Activated naive CD4-positive, alpha-beta T cell treated with anti-CD3 and anti-CD28 coated beads for 36 hours (primary cell): ENCODE measurements at regions of chr2 and their contacts with region 1.

Region 1: GRCh38 chr2:68742626-68743415 is 8.2 kb downstream of the ARHGAP25 start:
- DNase-seq: peak; percentile 45
- H3K4me3 Mint-ChIP-seq: no peak overlapping the region
- H3K27ac Mint-ChIP-seq: peak overlapping the region; percentile 91
- H3K4me1 Mint-ChIP-seq: peaks cover 93% of the 10 kb centered on the region
- H3K27me3 Mint-ChIP-seq: no peaks in the 10 kb centered on the region

Region 2: GRCh38 chr2:68500649-68501048 is 242.2 kb before region 1 on chr2:
- CTCF ChIA-PET with region 1: no interaction called
- intact Hi-C with region 1: no loop called
- DNase-seq: no peak
- H3K4me3 Mint-ChIP-seq: no peak overlapping the region
- H3K27ac Mint-ChIP-seq: no peak overlapping the region
- H3K4me1 Mint-ChIP-seq: peaks cover 2% of the 10 kb centered on the region
- H3K27me3 Mint-ChIP-seq: no peaks in the 10 kb centered on the region

Region 3: GRCh38 chr2:68643011-68643873 is 99.6 kb before region 1 on chr2 and contains the start of gene PROKR1:
- CTCF ChIA-PET with region 1: no interaction called
- intact Hi-C with region 1: no loop called
- DNase-seq: peak; percentile 30
- H3K4me3 Mint-ChIP-seq: peak within 1 kb of the TSS; percentile 25
- H3K27ac Mint-ChIP-seq: no peak within 1 kb of the TSS
- H3K4me1 Mint-ChIP-seq: peaks cover 10% of the 10 kb centered on the region
- H3K27me3 Mint-ChIP-seq: peaks cover 62% of the 10 kb centered on the region
- total RNA-seq, gene PROKR1: not detected

Region 4: DNA sequence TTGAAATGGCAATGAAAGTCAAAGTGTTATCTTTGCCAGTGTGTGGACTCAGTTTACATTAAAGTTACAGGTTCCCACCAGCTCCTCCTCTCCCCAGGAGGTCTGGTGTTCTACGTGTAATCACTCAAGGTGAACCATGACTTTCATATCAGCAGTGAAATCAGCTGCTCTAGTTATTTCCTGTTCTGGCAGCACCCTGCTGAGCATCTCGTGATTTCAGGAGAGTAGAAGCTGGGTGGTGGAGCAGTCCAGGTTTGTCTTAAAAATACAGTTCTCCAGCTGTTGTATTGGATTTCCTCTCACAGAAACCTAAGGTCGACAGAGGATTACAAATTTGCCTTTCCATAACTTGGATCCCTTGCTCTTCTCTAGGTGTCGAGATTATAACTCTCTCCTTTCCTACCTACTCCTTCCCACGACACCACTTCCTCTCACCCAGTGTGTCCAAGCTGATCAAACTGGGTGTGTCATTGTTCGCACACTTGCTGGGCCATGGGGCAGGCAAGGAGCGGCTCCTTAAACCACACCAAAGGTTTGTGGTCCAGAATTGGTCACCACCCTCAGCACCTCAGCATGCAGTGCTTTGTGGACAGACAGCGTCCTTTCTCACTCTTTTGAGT is 21.2 kb before region 1 on chr2:
- CTCF ChIA-PET with region 1: interaction called, 23 read pairs
- intact Hi-C with region 1: loop called (anchors 1 kb)
- DNase-seq: peak; percentile 62
- H3K4me3 Mint-ChIP-seq: peak overlapping the region; percentile 52
- H3K27ac Mint-ChIP-seq: peak overlapping the region; percentile 87
- H3K4me1 Mint-ChIP-seq: peaks cover 82% of the 10 kb centered on the region
- H3K27me3 Mint-ChIP-seq: no peaks in the 10 kb centered on the region

Region 5: GRCh38 chr2:68726608-68727367 is 16.0 kb before region 1 on chr2:
- CTCF ChIA-PET with region 1: interaction called, 20 read pairs
- intact Hi-C with region 1: loop called (anchors 1 kb)
- DNase-seq: peak; percentile 94
- H3K4me3 Mint-ChIP-seq: peak overlapping the region; percentile 11
- H3K27ac Mint-ChIP-seq: peak overlapping the region; percentile 82
- H3K4me1 Mint-ChIP-seq: peaks cover 64% of the 10 kb centered on the region
- H3K27me3 Mint-ChIP-seq: no peaks in the 10 kb centered on the region